ENCODE measurements at regions of chr16 and their contacts with region 1.

Region 1: DNA sequence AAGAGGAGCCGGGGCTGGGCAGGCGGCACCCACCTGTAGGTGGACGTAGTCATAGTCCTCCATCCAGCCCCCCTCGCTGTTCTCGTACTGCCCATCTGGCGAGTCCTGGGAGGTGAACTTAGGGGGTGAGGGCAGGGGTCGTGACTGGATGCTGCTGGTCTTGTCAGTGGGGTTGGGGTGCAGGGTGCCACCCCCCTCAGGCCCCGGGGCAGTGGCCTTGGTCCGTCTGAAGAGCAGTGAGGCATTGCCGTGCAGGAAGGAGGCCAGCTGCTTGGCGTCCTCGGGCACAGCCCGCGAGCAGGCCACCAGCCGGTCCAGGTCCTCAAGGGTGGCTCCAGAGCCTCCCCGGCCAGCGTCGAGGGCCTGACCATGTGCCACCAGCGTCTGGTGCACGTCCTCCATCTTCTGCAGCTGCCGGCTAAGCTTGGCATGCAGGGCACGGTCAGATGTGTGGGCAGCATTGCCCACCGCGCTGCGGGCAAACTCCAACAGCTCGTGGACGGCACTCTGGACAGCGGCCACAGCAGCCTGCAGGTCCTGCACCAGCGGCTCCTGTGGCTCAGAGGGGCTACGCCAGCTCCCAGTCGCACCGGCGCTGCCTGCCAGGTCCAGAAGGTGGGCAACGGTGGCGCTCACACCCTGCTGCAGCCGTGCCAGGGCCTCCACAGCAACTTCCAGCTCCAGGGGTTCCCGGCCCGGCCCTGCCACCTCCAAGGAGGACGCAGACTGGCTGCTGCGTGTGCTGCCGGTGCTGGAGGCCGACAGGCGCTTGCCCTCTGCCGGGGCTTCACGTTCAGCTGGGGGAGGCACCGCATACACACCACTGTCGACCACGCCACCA is 16.3 kb downstream of the CTRB1 start:
- DNase-seq: no peak
- H3K4me3 ChIP-seq: no peak overlapping the region
- H3K4me3 Mint-ChIP-seq: no peak overlapping the region
- H3K27ac ChIP-seq: no peak overlapping the region
- H3K27ac Mint-ChIP-seq: no peak overlapping the region
- H3K4me1 ChIP-seq: no peaks in the 10 kb centered on the region
- H3K4me1 Mint-ChIP-seq: peaks cover 4 to 11% (median 6%) of the 10 kb centered on the region in 3 donors
- H3K27me3 ChIP-seq: no peaks in the 10 kb centered on the region
- H3K27me3 Mint-ChIP-seq: peaks cover 4 to 8% of the 10 kb centered on the region in 2 donors

Region 2: GRCh38 chr16:75198135-75198600 is 36.9 kb before region 1 on chr16:
- CTCF ChIA-PET with region 1: interaction called, 24 read pairs
- POLR2A ChIA-PET with region 1: no interaction called
- DNase-seq: no peak
- H3K4me3 ChIP-seq: no peak overlapping the region
- H3K4me3 Mint-ChIP-seq: no peak overlapping the region
- H3K27ac ChIP-seq: no peak overlapping the region
- H3K27ac Mint-ChIP-seq: no peak overlapping the region
- H3K4me1 ChIP-seq: peaks cover 17% of the 10 kb centered on the region
- H3K4me1 Mint-ChIP-seq: peaks cover 11 to 15% (median 14%) of the 10 kb centered on the region in 3 donors
- H3K27me3 ChIP-seq: no peaks in the 10 kb centered on the region
- H3K27me3 Mint-ChIP-seq: peaks cover 7 to 22% of the 10 kb centered on the region in 2 donors

Region 3: GRCh38 chr16:75385507-75386152 is 150.6 kb after region 1 on chr16:
- CTCF ChIA-PET with region 1: interaction called, 121 read pairs
- POLR2A ChIA-PET with region 1: interaction called, 7 read pairs
- DNase-seq: peak in 2 of 5 donors; percentile 45
- H3K4me3 ChIP-seq: no peak overlapping the region
- H3K4me3 Mint-ChIP-seq: no peak overlapping the region
- H3K27ac ChIP-seq: no peak overlapping the region
- H3K27ac Mint-ChIP-seq: no peak overlapping the region
- H3K4me1 ChIP-seq: peaks cover 23% of the 10 kb centered on the region
- H3K4me1 Mint-ChIP-seq: peaks cover 12 to 23% (median 21%) of the 10 kb centered on the region in 3 donors
- H3K27me3 ChIP-seq: no peaks in the 10 kb centered on the region
- H3K27me3 Mint-ChIP-seq: no peaks in the 10 kb centered on the region

Region 4: GRCh38 chr16:75392911-75393310 is 157.8 kb after region 1 on chr16:
- CTCF ChIA-PET with region 1: interaction called, 121 read pairs
- POLR2A ChIA-PET with region 1: no interaction called
- DNase-seq: no peak
- H3K4me3 ChIP-seq: no peak overlapping the region
- H3K4me3 Mint-ChIP-seq: no peak overlapping the region
- H3K27ac ChIP-seq: no peak overlapping the region
- H3K27ac Mint-ChIP-seq: no peak overlapping the region
- H3K4me1 ChIP-seq: no peaks in the 10 kb centered on the region
- H3K4me1 Mint-ChIP-seq: peaks cover 0 to 6% (median 4%) of the 10 kb centered on the region in 3 donors
- H3K27me3 ChIP-seq: no peaks in the 10 kb centered on the region
- H3K27me3 Mint-ChIP-seq: no peaks in the 10 kb centered on the region

Region 5: DNA sequence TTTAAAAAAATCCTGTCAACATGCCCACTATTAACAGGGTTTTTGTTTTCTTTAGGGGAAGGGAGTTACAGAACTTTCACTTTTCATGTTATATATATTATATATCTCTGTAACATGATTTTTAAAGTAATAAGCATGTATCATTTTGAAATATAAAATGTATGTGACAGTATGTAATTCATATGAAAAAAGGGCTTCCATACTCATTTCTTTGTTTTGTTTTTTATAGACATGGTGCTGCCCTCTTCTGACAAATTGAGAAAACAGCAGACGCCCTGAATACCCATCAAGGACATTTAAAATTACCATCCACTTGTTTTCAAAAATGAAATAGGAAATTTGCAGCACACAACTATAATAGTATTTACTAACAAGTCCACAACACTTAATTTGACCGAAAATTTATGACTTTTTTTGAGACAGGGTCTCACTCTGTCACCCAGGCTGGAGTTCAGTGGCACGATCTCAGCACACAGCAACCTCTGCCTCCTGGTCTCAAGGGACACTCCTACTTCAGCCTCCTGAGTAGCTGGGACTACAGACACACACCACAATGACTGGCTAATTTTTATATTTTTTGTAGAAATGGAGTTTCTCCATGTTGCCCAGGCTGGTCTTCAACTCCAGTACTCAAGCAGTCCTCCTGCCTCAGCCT is 167.9 kb after region 1 on chr16:
- CTCF ChIA-PET with region 1: interaction called, 20 read pairs
- POLR2A ChIA-PET with region 1: no interaction called
- DNase-seq: peak in 1 of 5 donors; percentile 27
- H3K4me3 ChIP-seq: no peak overlapping the region
- H3K4me3 Mint-ChIP-seq: no peak overlapping the region
- H3K27ac ChIP-seq: no peak overlapping the region
- H3K27ac Mint-ChIP-seq: peak overlapping the region in 1 of 8 donors; percentile 26
- H3K4me1 ChIP-seq: no peaks in the 10 kb centered on the region
- H3K4me1 Mint-ChIP-seq: peaks cover 0 to 2% (median 0%) of the 10 kb centered on the region in 3 donors
- H3K27me3 ChIP-seq: no peaks in the 10 kb centered on the region
- H3K27me3 Mint-ChIP-seq: no peaks in the 10 kb centered on the region

Region 6: GRCh38 chr16:75764154-75764768 is 529.2 kb after region 1 on chr16:
- CTCF ChIA-PET with region 1: interaction called, 10 read pairs
- POLR2A ChIA-PET with region 1: no interaction called
- DNase-seq: peak; percentile 26 to 71 (median 56)
- H3K4me3 ChIP-seq: no peak overlapping the region
- H3K4me3 Mint-ChIP-seq: no peak overlapping the region
- H3K27ac ChIP-seq: no peak overlapping the region
- H3K27ac Mint-ChIP-seq: peak overlapping the region in 2 of 8 donors; percentile 32 to 85
- H3K4me1 ChIP-seq: no peaks in the 10 kb centered on the region
- H3K4me1 Mint-ChIP-seq: peaks cover 0 to 2% (median 0%) of the 10 kb centered on the region in 3 donors
- H3K27me3 ChIP-seq: no peaks in the 10 kb centered on the region
- H3K27me3 Mint-ChIP-seq: peaks cover 3 to 12% of the 10 kb centered on the region in 2 donors

Measured in CD8-positive, alpha-beta memory T cell (primary cell).